ENCODE measurements at regions of chr19 and their contacts with region 1.

Region 1: DNA sequence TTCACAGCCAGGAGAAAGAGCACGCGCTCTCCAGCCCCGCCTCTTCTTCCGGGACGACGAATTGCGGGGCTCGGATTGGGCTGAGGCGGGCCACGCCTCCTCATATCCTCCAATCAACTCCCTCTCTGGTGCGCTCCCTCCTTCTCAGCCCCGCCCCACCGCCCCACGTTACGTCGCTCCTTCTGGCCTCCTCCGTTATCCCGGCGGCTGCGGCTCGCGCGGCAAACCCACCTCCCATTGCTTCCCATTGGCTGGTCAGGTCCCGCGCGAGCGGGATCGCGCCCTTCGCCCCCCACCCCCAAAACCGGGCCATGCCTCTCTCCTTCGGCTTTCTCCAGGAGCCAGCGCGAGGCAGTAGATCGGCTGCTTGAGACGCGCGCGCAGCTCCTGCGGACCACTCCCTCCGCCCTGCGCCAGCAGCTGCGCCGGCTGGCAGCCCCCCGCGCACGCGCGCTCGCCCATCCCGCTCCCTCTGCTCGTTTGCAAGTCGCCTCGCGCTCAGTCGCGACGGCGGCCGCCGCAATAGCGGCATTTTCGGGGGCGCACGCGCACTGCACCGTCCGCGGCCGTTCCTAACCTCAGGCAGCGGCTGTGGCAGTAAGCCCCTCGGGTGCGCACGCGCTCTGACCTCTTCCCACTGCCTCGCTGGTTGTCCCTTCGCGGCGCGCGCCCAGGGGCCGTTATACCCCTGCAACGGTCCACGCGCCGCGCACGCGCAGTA is 512 bp upstream of the ARHGAP35 start:
- DNase-seq: peak; percentile 98 to 99 (median 98)
- ATAC-seq: peak; percentile 75 to 85 (median 78)
- H3K4me3 ChIP-seq: peak overlapping the region; percentile 69 to 95 (median 85)
- H3K27ac ChIP-seq: peak overlapping the region; percentile 95 to 99 (median 98)
- H3K4me1 ChIP-seq: peaks cover 0 to 39% (median 18%) of the 10 kb centered on the region in 4 donors
- H3K27me3 ChIP-seq: no peaks in the 10 kb centered on the region
- CTCF ChIP-seq: peak in 1 of 4 donors; percentile 6
- POLR2A ChIP-seq: peak; percentile 91

Region 2: GRCh38 chr19:46813839-46814363 is 46.4 kb before region 1 on chr19:
- intact Hi-C with region 1: no loop called
- DNase-seq: peak; percentile 85 to 91 (median 85)
- ATAC-seq: peak; percentile 88 to 93 (median 91)
- H3K4me3 ChIP-seq: no peak overlapping the region
- H3K27ac ChIP-seq: no peak overlapping the region
- H3K4me1 ChIP-seq: peaks cover 0 to 8% (median 0%) of the 10 kb centered on the region in 4 donors
- H3K27me3 ChIP-seq: no peaks in the 10 kb centered on the region
- CTCF ChIP-seq: no peak
- POLR2A ChIP-seq: no peak

Region 3: DNA sequence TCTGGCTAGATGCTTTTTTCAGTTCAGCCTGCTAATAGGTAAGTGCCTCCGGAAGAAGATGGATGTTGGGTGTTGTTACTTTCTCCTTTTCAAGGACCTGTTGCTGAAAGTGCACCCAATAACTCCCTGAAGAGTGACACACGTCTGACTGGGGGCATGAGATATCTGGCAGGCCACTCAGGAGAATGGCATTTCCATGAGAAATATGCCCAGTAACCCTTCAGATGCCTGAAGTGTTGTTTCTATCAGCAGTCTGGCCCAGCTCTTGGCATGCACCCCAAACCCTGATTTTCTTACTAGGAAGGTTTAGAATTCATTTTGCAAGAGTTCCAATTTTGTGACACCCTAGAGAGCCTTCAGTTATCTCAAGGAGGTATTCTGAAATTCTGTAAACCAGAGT is 72.1 kb after region 1 on chr19:
- intact Hi-C with region 1: no loop called
- DNase-seq: peak in 1 of 3 donors; percentile 6
- ATAC-seq: no peak
- H3K4me3 ChIP-seq: no peak overlapping the region
- H3K27ac ChIP-seq: no peak overlapping the region
- H3K4me1 ChIP-seq: peaks cover 0 to 7% (median 3%) of the 10 kb centered on the region in 4 donors
- H3K27me3 ChIP-seq: no peaks in the 10 kb centered on the region
- CTCF ChIP-seq: no peak
- POLR2A ChIP-seq: no peak

Region 4: GRCh38 chr19:46984077-46985010 is 124.1 kb after region 1 on chr19:
- intact Hi-C with region 1: loop called in 1 of 2 experiments (anchors 5 kb)
- DNase-seq: peak; percentile 82 to 89 (median 85)
- ATAC-seq: peak; percentile 80 to 89 (median 82)
- H3K4me3 ChIP-seq: no peak overlapping the region
- H3K27ac ChIP-seq: peak overlapping the region; percentile 66 to 97 (median 88)
- H3K4me1 ChIP-seq: peaks cover 0 to 59% (median 18%) of the 10 kb centered on the region in 4 donors
- H3K27me3 ChIP-seq: no peaks in the 10 kb centered on the region
- CTCF ChIP-seq: no peak
- POLR2A ChIP-seq: peak; percentile 55

Region 5: GRCh38 chr19:46990991-46991676 is 130.8 kb after region 1 on chr19:
- intact Hi-C with region 1: loop called (anchors 5 kb)
- DNase-seq: peak; percentile 79 to 86 (median 82)
- ATAC-seq: peak; percentile 70 to 78 (median 74)
- H3K4me3 ChIP-seq: no peak overlapping the region
- H3K27ac ChIP-seq: peak overlapping the region; percentile 32 to 40 (median 38)
- H3K4me1 ChIP-seq: peaks cover 0 to 35% (median 10%) of the 10 kb centered on the region in 4 donors
- H3K27me3 ChIP-seq: no peaks in the 10 kb centered on the region
- CTCF ChIP-seq: peak; percentile 74 to 87 (median 86)
- POLR2A ChIP-seq: no peak